Mucosa of descending colon (tissue), 3 donors: ENCODE measurements at regions of chr4 and their contacts with region 1.

Region 1: GRCh38 chr4:33592701-33593100 is 2651.6 kb downstream of the ARAP2 start:
- DNase-seq: no peak
- ATAC-seq: no peak
- H3K4me3 ChIP-seq: no peak overlapping the region
- H3K4me1 ChIP-seq: no peaks in the 10 kb centered on the region
- CTCF ChIP-seq: no peak

Region 2: DNA sequence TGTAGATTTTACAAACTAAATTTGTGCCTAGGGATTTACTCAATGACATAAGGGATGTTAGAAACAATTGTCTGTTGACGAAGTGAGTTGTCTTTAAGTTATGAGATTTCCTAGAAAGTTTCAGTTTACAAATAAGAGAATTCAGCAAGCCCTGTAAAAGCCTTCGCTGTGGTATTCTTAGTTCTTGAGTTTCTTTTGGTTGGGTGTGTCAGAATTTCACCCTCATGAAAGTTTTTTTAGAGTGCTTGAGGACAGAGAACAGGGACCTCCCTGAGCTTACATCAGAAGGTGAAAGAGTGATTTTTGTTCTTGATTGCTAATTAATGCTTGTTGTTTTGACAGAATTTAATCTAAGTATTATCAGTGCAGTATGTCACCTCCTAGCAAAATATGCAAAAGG is 23.4 kb after region 1 on chr4:
- intact Hi-C with region 1: loop called in 1 of 2 experiments (anchors 1 kb)
- DNase-seq: no peak
- ATAC-seq: no peak
- H3K4me3 ChIP-seq: no peak overlapping the region
- H3K4me1 ChIP-seq: no peaks in the 10 kb centered on the region
- CTCF ChIP-seq: no peak

Region 3: DNA sequence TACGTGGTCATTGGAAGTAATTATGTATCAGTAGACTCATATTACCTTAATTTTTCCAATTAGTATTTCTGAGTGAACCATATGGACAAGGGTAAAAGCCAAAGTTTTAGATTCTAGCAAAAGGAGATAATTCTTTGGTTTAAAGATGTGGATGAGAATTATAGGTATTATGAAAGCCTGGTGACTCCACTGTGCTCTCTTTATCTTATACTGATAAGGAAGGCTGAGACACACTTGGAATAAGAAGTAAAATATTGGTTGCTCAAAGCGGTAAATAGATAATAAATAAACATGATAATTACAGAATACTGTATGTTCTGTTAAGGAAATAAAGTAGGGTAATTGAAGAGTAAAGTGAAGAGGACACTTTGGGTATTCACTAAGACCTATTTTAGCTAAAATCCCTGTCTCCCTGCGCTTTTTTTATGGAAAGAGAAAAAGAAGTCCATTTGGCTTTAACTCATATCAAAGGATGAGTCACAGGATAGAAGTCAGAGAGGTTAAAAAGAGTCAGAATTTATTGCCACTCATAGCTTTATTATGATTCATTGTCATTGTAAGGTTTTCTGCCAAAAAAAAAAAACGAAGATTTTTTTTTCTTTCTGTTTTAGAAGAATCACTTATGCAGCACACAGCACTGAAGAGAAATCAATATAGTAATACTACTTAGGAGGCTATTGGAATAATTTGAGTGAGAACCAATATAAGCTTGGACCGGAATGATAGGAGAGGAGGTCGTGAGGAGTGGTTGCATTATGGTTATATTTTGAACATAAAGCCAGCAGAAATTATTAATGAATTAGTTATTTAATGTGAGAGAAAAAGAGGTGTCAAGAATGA is 188.5 kb after region 1 on chr4:
- intact Hi-C with region 1: no loop called
- DNase-seq: no peak
- ATAC-seq: no peak
- H3K4me3 ChIP-seq: no peak overlapping the region
- H3K4me1 ChIP-seq: no peaks in the 10 kb centered on the region
- CTCF ChIP-seq: no peak

Region 4: DNA sequence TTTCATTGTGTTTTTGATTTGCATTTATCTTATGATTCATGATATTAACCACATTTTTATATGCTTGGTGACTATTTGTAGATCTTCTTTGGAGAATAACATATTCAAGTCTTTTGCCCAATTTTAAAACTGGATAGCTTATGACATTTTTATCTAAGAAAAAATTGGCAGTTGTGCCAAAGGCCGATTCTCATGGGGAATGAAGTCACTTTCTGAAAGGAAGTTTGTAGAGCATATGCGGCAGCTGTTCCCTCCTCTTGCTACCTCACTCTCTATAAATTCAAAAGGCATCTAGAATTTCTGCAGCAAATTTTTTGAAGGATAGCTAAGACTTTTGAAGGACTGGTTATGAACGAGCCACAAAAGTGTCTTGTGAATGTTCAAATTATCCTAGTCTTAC is 298.1 kb after region 1 on chr4:
- intact Hi-C with region 1: no loop called
- DNase-seq: no peak
- ATAC-seq: no peak
- H3K4me3 ChIP-seq: no peak overlapping the region
- H3K4me1 ChIP-seq: no peaks in the 10 kb centered on the region
- CTCF ChIP-seq: no peak